CD14-positive monocyte (primary cell): ENCODE measurements at regions of chr16 and their contacts with region 1.

Region 1: DNA sequence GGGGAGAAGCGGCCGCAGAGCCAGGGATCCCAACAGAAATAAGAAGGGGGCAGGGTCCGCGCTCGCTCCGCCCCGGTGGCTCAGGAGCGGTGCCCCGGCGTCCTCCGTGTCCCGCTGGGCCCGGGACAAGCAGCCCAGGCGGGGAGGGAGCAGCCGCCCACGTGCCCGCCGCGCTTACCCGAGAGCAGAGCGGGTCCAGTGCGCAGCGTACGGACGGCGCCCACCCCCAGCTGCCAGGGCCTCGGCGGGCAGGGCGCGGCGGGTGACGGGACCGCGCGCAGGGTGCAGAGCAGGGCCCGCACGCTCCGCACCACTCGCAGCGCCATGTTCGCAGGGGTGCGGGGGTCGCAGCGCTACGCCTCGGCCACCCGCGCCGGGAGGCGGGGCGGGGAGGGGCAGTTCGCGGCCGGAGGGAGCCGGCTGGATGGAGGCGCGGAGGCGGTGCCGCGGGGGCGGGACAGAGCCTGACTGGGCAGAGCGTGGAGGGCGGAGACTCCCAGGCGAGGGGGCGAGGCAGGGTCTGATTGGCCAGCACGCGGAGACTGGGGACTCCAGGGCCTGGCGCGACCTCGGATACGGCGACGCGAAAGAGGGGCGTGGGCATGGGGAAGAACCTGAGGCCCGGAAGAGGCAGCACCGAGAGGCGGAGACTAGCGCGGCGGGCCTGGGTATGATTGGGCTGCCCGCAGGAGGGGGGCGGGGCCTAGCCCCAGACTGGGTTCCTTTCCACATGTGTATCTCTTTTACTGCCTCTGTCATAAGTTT is at the start of gene GCSH:
- DNase-seq: peak; percentile 97 to 98 (median 98)
- H3K4me3 ChIP-seq: peak within 1 kb of the TSS; percentile 35 to 89 (median 44)
- H3K4me3 Mint-ChIP-seq: peak within 1 kb of the TSS; percentile 76 to 89
- H3K27ac ChIP-seq: peak within 1 kb of the TSS in 1 of 2 donors; percentile 25
- H3K27ac Mint-ChIP-seq: peak within 1 kb of the TSS in 3 of 7 donors; percentile 33 to 78 (median 55)
- H3K4me1 ChIP-seq: peaks cover 9 to 16% of the 10 kb centered on the region in 2 donors
- H3K4me1 Mint-ChIP-seq: peaks cover 15% of the 10 kb centered on the region
- H3K27me3 ChIP-seq: peaks cover 0 to 7% of the 10 kb centered on the region in 2 donors
- H3K27me3 Mint-ChIP-seq: peaks cover 15 to 17% (median 16%) of the 10 kb centered on the region in 3 donors
- CTCF ChIP-seq: no peak
- polyA plus RNA-seq, gene GCSH: 0.77 to 2.0 (median 1.0) TPM

Region 2: DNA sequence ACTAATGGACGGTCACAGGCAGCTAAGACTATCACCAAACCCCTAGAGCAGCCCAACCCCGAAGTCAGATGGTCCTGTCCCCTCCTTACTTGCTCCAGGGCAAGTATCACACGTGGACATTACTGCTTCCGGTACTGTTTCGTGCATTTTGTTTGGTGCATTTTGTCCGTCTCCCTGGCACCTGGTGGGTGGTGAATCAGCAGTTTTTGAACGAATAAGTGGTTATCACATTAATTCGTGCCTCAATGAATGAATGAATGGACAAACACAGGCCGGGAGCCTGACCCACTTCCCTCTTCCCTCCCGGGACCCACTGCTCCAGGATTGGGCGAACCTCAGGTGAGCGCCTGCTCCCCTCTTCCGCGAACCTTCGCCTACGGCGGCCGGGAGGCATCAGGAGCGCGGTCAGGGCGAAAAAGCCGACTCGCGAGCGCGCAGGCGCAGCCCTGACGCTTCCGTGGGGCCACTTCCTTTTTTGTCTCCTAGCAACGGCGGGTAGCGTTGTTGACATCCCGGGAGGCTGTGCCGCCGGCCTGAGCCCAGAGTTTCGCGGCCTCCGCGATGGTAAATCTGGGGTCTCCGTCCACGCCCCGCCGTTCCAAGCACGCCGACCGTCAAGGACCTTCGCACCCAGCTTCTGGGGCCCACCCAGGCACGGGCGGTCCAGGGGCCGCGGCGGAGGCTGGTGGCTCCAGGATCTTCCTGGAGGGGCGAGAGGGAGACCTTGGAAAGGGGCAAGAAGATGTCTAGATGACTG is 555.4 kb before region 1 on chr16 and contains the start of gene DYNLRB2:
- intact Hi-C with region 1: loop called in 1 of 2 experiments (anchors 10 kb)
- DNase-seq: peak; percentile 91 to 93 (median 91)
- H3K4me3 ChIP-seq: peak within 1 kb of the TSS; percentile 73 to 90 (median 85)
- H3K4me3 Mint-ChIP-seq: peak within 1 kb of the TSS; percentile 86 to 93
- H3K27ac ChIP-seq: peak within 1 kb of the TSS; percentile 34 to 84
- H3K27ac Mint-ChIP-seq: peak within 1 kb of the TSS; percentile 90 to 97 (median 92)
- H3K4me1 ChIP-seq: peaks cover 11 to 12% of the 10 kb centered on the region in 2 donors
- H3K4me1 Mint-ChIP-seq: peaks cover 15% of the 10 kb centered on the region
- H3K27me3 ChIP-seq: peaks cover 0 to 4% of the 10 kb centered on the region in 2 donors
- H3K27me3 Mint-ChIP-seq: peaks cover 4 to 11% (median 10%) of the 10 kb centered on the region in 3 donors
- CTCF ChIP-seq: no peak
- polyA plus RNA-seq, gene DYNLRB2: not detected

Region 3: DNA sequence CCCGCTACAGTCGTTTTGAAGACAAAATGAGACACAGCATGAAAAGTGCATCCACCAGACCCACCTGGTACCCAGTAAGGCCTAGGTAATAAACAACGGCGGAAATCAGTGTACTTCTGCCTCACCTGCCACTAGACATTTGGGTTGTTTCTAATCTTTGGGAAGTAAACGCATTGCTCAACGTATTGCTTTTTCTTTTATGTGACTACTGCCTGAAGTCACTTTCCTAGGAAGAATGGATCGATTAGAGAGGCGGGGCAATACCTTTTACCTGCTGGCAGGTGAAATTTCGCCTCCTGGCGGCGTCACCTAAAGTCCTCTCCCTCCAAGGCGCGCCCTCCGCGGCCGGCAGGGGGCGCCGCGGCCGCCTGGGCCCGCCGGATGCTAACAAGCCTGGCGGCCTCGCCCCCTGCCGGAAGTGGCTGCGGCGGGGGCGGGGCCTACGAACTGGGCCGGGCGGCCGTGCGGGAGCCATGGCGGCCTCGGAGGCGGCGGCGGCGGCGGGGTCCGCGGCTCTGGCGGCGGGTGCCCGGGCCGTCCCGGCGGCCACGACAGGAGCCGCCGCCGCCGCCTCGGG is 60.6 kb before region 1 on chr16 and contains the start of gene ATMIN:
- intact Hi-C with region 1: loop called in 1 of 2 experiments (anchors 5 kb)
- DNase-seq: peak; percentile 72 to 87 (median 84)
- H3K4me3 ChIP-seq: peak within 1 kb of the TSS; percentile 49 to 84 (median 73)
- H3K4me3 Mint-ChIP-seq: peak within 1 kb of the TSS; percentile 82 to 88
- H3K27ac ChIP-seq: peak within 1 kb of the TSS in 1 of 2 donors; percentile 50
- H3K27ac Mint-ChIP-seq: peak within 1 kb of the TSS in 6 of 7 donors; percentile 56 to 70 (median 62)
- H3K4me1 ChIP-seq: peaks cover 14% of the 10 kb centered on the region in 2 donors
- H3K4me1 Mint-ChIP-seq: peaks cover 23% of the 10 kb centered on the region
- H3K27me3 ChIP-seq: no peaks in the 10 kb centered on the region
- H3K27me3 Mint-ChIP-seq: no peaks in the 10 kb centered on the region
- CTCF ChIP-seq: peak; percentile 95
- polyA plus RNA-seq, gene ATMIN: 10.9 to 17.6 (median 13.2) TPM

Region 4: DNA sequence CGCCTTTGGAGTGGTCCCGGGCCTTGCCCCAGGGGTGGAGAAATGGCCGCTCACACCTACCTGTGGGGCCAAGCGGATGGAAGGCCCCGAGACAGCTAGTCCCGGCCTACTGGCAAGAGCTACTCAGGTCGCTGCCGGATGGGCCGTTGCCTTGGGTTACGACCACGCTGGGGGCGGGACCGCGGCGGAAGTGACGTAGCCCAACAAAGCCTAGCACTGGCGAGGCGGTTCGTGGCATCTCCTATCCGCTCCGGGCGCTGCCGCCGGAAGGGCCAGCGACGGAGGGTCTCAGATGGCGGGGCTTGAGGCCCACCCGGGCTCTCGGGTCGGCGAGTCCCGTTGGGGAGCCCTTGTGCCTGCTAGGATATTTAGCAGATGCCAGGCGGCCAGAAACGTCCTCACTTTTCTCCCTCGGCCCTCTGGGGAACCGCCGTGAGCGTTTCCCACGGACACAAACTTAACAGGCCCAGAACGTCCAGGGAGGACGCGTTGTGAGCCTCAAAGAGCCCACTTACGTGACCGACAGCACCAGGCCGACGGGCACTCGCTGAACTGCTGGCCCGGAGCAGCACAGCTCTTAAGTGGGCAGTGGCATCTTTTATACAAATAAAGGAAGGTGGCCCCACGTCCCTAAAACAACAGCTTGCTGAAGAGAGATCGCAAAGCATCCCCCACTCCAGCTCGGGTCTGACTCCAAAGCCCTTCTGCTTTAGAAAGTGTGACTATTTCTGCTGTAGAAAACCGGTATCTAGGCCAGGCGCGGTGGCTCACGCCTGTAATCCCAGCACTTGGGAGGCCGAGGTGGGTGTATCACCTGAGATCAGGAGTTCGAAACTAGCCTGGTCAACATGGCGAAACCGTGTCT is 18.8 kb before region 1 on chr16 and contains the start of gene C16orf46:
- intact Hi-C with region 1: loop called (anchors 1 to 2 kb)
- DNase-seq: peak; percentile 92 to 95 (median 94)
- H3K4me3 ChIP-seq: peak within 1 kb of the TSS; percentile 75 to 92 (median 78)
- H3K4me3 Mint-ChIP-seq: no peak within 1 kb of the TSS
- H3K27ac ChIP-seq: peak within 1 kb of the TSS; percentile 76 to 91
- H3K27ac Mint-ChIP-seq: no peak within 1 kb of the TSS
- H3K4me1 ChIP-seq: peaks cover 12 to 13% of the 10 kb centered on the region in 2 donors
- H3K4me1 Mint-ChIP-seq: peaks cover 3% of the 10 kb centered on the region
- H3K27me3 ChIP-seq: no peaks in the 10 kb centered on the region
- H3K27me3 Mint-ChIP-seq: peaks cover 0 to 4% (median 2%) of the 10 kb centered on the region in 3 donors
- CTCF ChIP-seq: no peak
- polyA plus RNA-seq, gene C16orf46: 0.37 to 0.42 TPM in 2 of 3 donors, not detected in the other

Region 5: DNA sequence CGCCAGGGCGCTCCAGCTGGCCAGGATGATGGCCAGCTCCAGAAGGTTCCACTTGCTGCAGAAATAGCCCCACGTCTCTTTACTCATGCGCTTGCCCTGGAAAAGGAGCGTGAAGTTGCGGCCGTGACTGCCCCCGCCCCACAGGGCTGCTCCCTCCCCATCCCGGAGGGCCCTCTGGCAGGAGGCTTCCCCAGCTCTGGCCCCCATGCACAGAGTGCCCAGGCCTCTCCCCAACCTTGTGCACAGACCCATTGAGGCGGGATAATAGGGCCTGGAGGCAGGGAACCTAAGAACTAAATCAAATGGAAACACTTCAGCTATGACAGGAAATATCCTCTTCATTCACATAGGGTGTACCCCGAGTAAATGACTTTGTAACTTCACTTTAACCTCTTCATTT is 21.3 kb after region 1 on chr16:
- intact Hi-C with region 1: no loop called
- DNase-seq: no peak
- H3K4me3 ChIP-seq: no peak overlapping the region
- H3K4me3 Mint-ChIP-seq: no peak overlapping the region
- H3K27ac ChIP-seq: no peak overlapping the region
- H3K27ac Mint-ChIP-seq: no peak overlapping the region
- H3K4me1 ChIP-seq: no peaks in the 10 kb centered on the region
- H3K4me1 Mint-ChIP-seq: no peaks in the 10 kb centered on the region
- H3K27me3 ChIP-seq: no peaks in the 10 kb centered on the region
- H3K27me3 Mint-ChIP-seq: peaks cover 8 to 19% (median 10%) of the 10 kb centered on the region in 3 donors
- CTCF ChIP-seq: no peak

Region 6: DNA sequence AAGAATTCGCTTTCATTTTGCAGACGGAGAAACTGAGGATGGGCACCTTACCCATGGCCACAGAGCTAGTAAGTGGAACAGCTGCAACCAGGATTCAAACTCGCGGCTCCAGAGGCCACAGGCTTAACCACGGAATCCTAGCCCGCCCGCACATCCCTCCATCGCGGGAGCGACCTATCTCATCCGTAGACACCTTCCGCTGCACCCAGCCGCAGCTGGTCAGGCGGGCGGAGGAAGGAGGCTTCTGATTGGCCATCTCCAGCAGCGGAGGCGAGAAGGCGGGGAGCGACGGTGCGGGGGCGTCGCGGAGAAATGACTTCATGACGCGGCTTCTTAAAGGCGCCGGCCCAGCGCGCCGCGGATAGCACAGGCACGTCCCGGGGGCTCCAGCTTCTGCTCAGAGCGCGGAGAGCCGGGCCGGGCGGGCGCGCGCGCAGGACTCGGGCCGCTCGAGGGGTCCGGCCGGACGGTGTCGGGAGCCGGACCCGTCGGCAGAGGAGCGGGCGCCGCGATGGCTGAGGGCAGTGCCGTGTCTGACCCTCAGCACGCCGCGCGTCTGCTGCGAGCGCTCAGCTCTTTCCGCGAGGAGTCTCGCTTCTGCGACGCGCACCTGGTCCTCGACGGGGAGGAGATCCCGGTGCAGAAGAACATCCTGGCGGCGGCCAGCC is 218.6 kb after region 1 on chr16 and contains the start of gene GAN:
- intact Hi-C with region 1: loop called in 1 of 2 experiments (anchors 10 kb)
- DNase-seq: peak; percentile 91 to 93 (median 93)
- H3K4me3 ChIP-seq: peak within 1 kb of the TSS; percentile 74 to 92 (median 76)
- H3K4me3 Mint-ChIP-seq: peak within 1 kb of the TSS; percentile 95 to 97
- H3K27ac ChIP-seq: peak within 1 kb of the TSS in 1 of 2 donors; percentile 85
- H3K27ac Mint-ChIP-seq: peak within 1 kb of the TSS; percentile 60 to 94 (median 89)
- H3K4me1 ChIP-seq: peaks cover 15 to 24% of the 10 kb centered on the region in 2 donors
- H3K4me1 Mint-ChIP-seq: peaks cover 30% of the 10 kb centered on the region
- H3K27me3 ChIP-seq: peaks cover 0 to 3% of the 10 kb centered on the region in 2 donors
- H3K27me3 Mint-ChIP-seq: peaks cover 0 to 7% (median 5%) of the 10 kb centered on the region in 3 donors
- CTCF ChIP-seq: no peak
- polyA plus RNA-seq, gene GAN: 0.89 to 1.2 (median 1.0) TPM